Caco-2 (cell line): ENCODE measurements at regions of chr19 and their contacts with region 1.

Region 1: GRCh38 chr19:56567274-56568120 is at the start of gene ZNF470:
- DNase-seq: peak; percentile 79 to 92
- H3K4me3 ChIP-seq: peak within 1 kb of the TSS; percentile 61
- H3K4me3 Mint-ChIP-seq: peak within 1 kb of the TSS; percentile 92
- H3K27ac Mint-ChIP-seq: peak within 1 kb of the TSS; percentile 62
- H3K4me1 ChIP-seq: no peaks in the 10 kb centered on the region
- H3K4me1 Mint-ChIP-seq: no peaks in the 10 kb centered on the region
- H3K27me3 ChIP-seq: no peaks in the 10 kb centered on the region
- H3K27me3 Mint-ChIP-seq: no peaks in the 10 kb centered on the region
- CTCF ChIP-seq: no peak
- total RNA-seq, gene ZNF470: 0.43 and 1.1 TPM in 2 replicates

Region 2: GRCh38 chr19:56594783-56595547 is 27.5 kb after region 1 on chr19 and contains the start of gene ZNF71:
- CTCF ChIA-PET with region 1: no interaction called
- POLR2A ChIA-PET with region 1: no interaction called
- intact Hi-C with region 1: loop called (anchors 1 kb)
- DNase-seq: peak; percentile 72 to 81
- H3K4me3 ChIP-seq: peak within 1 kb of the TSS; percentile 59
- H3K4me3 Mint-ChIP-seq: peak within 1 kb of the TSS; percentile 72
- H3K27ac Mint-ChIP-seq: no peak within 1 kb of the TSS
- H3K4me1 ChIP-seq: no peaks in the 10 kb centered on the region
- H3K4me1 Mint-ChIP-seq: no peaks in the 10 kb centered on the region
- H3K27me3 ChIP-seq: no peaks in the 10 kb centered on the region
- H3K27me3 Mint-ChIP-seq: no peaks in the 10 kb centered on the region
- CTCF ChIP-seq: no peak
- total RNA-seq, gene ZNF71: 1.1 and 1.5 TPM in 2 replicates